ENCODE measurements at regions of chr7 and their contacts with region 1.

Region 1: DNA sequence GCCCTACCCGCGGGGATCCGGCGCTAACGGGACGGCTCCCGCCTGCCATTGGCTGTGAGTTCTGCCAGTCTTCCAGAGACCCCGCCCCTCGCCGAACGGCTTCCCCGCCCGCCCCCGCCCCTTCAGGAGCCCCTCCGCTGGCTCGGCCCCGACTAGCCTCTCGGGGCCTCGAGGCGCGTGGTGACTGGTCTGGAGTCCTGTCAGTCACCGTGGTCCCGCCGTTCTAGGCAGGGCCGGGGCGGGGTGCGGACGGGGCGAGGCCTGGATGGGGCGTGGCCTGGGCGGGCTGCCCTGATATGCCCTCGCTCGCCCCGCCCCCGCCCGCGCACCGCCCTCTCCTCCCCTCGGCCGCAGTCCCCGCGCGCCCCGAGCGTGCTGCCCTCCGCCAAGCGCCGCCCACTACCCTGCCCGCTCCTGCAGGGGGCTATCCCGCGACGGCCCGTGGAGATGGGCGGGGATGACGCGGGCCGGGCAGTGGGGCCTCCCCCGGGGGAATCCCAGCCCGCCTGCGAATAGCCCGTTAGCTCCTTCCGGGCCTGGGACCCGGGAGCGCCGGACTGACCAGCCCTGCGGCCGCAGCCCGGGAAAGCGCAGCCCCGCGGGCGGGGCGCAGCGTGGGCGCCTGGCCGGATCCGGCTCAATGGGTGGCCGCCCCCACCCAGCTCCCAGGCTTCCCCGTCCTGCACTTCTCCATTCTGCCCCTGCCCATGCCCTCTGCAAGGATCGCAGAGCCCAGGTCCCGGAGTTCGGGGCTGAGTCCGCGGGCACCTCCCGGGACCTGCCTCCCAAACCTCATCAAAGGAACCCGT is 450 bp upstream of the HIP1 start:
- DNase-seq: peak; percentile 98
- H3K4me3 Mint-ChIP-seq: peak overlapping the region; percentile 89
- H3K27ac Mint-ChIP-seq: peak overlapping the region; percentile 90
- H3K4me1 Mint-ChIP-seq: peaks cover 10% of the 10 kb centered on the region
- H3K27me3 Mint-ChIP-seq: peaks cover 17% of the 10 kb centered on the region

Region 2: GRCh38 chr7:75531359-75531821 is 207.8 kb before region 1 on chr7:
- intact Hi-C with region 1: loop called (anchors 5 kb)
- DNase-seq: no peak
- H3K4me3 Mint-ChIP-seq: no peak overlapping the region
- H3K27ac Mint-ChIP-seq: no peak overlapping the region
- H3K4me1 Mint-ChIP-seq: peaks cover 23% of the 10 kb centered on the region
- H3K27me3 Mint-ChIP-seq: no peaks in the 10 kb centered on the region

Region 3: GRCh38 chr7:75756991-75757676 is 17.9 kb after region 1 on chr7:
- intact Hi-C with region 1: no loop called
- DNase-seq: no peak
- H3K4me3 Mint-ChIP-seq: no peak overlapping the region
- H3K27ac Mint-ChIP-seq: no peak overlapping the region
- H3K4me1 Mint-ChIP-seq: peaks cover under 1% of the 10 kb centered on the region
- H3K27me3 Mint-ChIP-seq: no peaks in the 10 kb centered on the region

Region 4: GRCh38 chr7:75861636-75862035 is 122.4 kb after region 1 on chr7:
- intact Hi-C with region 1: no loop called
- DNase-seq: no peak
- H3K4me3 Mint-ChIP-seq: no peak overlapping the region
- H3K27ac Mint-ChIP-seq: no peak overlapping the region
- H3K4me1 Mint-ChIP-seq: peaks cover 12% of the 10 kb centered on the region
- H3K27me3 Mint-ChIP-seq: peaks cover 5% of the 10 kb centered on the region

Region 5: DNA sequence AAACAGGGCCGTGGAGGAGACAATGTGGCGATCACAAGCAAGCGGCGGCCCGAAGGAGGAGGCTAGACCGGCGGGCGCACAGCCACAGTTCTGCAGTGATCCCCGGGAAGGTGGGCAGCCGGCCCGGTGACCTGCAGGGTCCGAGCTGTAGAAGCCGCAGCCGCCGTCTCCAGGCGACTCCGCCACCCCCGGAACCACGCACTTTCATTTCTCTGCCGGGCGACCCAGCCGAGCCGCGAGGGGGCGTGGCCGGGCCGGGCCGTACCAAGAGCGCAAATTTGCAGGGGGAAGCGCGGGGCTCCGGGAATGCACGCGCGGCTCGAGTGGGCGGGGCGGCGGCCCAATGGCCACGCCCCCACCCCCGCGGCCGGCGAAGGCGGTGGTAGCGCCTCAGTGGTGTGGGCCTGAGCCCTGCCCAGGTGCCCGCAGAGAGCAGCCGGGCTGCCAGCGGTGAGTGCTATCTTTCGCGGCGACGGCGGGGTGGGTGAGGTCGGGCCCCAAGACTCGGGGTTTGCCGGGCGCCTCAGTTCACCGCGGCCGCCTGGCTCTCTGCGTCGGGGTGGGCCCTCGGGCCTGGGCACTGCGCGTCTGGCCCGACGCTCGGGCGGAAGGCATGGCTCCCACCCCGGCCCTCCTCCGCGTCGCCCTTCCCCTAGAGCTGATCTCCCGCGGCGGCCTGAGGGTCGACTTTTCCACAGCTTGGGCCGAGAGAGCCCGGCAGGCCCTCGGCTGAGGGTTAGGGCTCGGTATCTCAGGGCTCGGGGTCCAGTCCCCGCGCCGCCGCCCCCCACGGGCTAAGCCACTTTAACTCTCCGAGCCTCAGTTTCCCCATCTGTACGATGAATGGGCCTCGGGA is 175.8 kb after region 1 on chr7 and contains the start of gene POR:
- intact Hi-C with region 1: loop called (anchors 5 kb)
- DNase-seq: peak; percentile 97
- H3K4me3 Mint-ChIP-seq: peak within 1 kb of the TSS; percentile 87
- H3K27ac Mint-ChIP-seq: peak within 1 kb of the TSS; percentile 80
- H3K4me1 Mint-ChIP-seq: peaks cover 15% of the 10 kb centered on the region
- H3K27me3 Mint-ChIP-seq: no peaks in the 10 kb centered on the region
- total RNA-seq, gene POR: 105 and 106 TPM in 2 replicates